Psoas muscle (tissue), 8 donors: ENCODE measurements at regions of chr20 and their contacts with region 1.

Region 1: GRCh38 chr20:46255429-46256104 is 52.7 kb downstream of the CDH22 start:
- DNase-seq: peak; percentile 61 to 82
- ATAC-seq: peak; percentile 26 to 70 (median 58)
- H3K4me3 ChIP-seq: no peak overlapping the region
- H3K27ac ChIP-seq: no peak overlapping the region
- H3K4me1 ChIP-seq: no peaks in the 10 kb centered on the region
- H3K27me3 ChIP-seq: peaks cover 4 to 40% (median 10%) of the 10 kb centered on the region in 3 donors
- CTCF ChIP-seq: no peak

Region 2: GRCh38 chr20:45629496-45630100 is 626.0 kb before region 1 on chr20 and contains the start of gene WFDC10A:
- intact Hi-C with region 1: no loop called
- DNase-seq: no peak
- ATAC-seq: peak in 2 of 4 donors; percentile 27 to 36
- H3K4me3 ChIP-seq: no peak within 1 kb of the TSS
- H3K27ac ChIP-seq: no peak within 1 kb of the TSS
- H3K4me1 ChIP-seq: no peaks in the 10 kb centered on the region
- H3K27me3 ChIP-seq: peaks cover 2 to 4% (median 2%) of the 10 kb centered on the region in 3 donors
- CTCF ChIP-seq: peak; percentile 33
- total RNA-seq, gene WFDC10A: not detected

Region 3: GRCh38 chr20:46214831-46215488 is 40.6 kb before region 1 on chr20:
- intact Hi-C with region 1: loop called in 1 of 2 experiments (anchors 5 kb)
- DNase-seq: no peak
- ATAC-seq: peak in 2 of 4 donors; percentile 24 to 28
- H3K4me3 ChIP-seq: no peak overlapping the region
- H3K27ac ChIP-seq: no peak overlapping the region
- H3K4me1 ChIP-seq: peaks cover 8% of the 10 kb centered on the region
- H3K27me3 ChIP-seq: peaks cover 0 to 29% (median 2%) of the 10 kb centered on the region in 3 donors
- CTCF ChIP-seq: no peak

Region 4: DNA sequence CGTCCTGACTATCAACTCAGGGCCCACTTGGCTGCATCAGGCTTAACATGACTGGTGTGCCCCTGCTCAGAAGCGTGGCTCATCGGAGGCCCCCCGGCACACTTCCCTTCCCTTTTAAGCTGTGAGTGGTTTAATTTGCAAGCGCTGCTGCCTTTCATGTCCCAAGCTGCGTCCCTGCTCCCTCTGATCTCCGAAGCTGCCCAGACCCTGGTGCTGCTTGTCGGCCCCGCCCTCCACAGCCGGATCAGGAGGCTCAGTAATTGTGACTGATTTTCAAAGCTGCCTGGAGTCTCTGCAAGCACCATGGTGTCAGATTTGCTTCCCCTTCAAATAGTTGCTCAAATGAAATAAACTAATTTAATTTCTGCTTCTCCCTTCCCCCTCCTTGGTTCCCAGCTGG is 18.3 kb before region 1 on chr20:
- intact Hi-C with region 1: loop called in 1 of 2 experiments (anchors 2 kb)
- DNase-seq: no peak
- ATAC-seq: no peak
- H3K4me3 ChIP-seq: no peak overlapping the region
- H3K27ac ChIP-seq: no peak overlapping the region
- H3K4me1 ChIP-seq: no peaks in the 10 kb centered on the region
- H3K27me3 ChIP-seq: peaks cover 0 to 14% (median 5%) of the 10 kb centered on the region in 3 donors
- CTCF ChIP-seq: no peak